Psoas muscle (tissue), 8 donors: ENCODE measurements at regions of chr14 and their contacts with region 1.

Region 1: GRCh38 chr14:82951171-82951570 is 1417.5 kb upstream of the SEL1L start:
- DNase-seq: no peak
- ATAC-seq: no peak
- H3K4me3 ChIP-seq: no peak overlapping the region
- H3K27ac ChIP-seq: no peak overlapping the region
- H3K4me1 ChIP-seq: no peaks in the 10 kb centered on the region
- H3K27me3 ChIP-seq: no peaks in the 10 kb centered on the region
- CTCF ChIP-seq: no peak

Region 2: GRCh38 chr14:82626156-82627066 is 324.8 kb before region 1 on chr14:
- intact Hi-C with region 1: no loop called
- DNase-seq: no peak
- ATAC-seq: no peak
- H3K4me3 ChIP-seq: no peak overlapping the region
- H3K27ac ChIP-seq: no peak overlapping the region
- H3K4me1 ChIP-seq: no peaks in the 10 kb centered on the region
- H3K27me3 ChIP-seq: no peaks in the 10 kb centered on the region
- CTCF ChIP-seq: no peak

Region 3: GRCh38 chr14:82911930-82912329 is 39.2 kb before region 1 on chr14:
- intact Hi-C with region 1: no loop called
- DNase-seq: no peak
- ATAC-seq: no peak
- H3K4me3 ChIP-seq: no peak overlapping the region
- H3K27ac ChIP-seq: no peak overlapping the region
- H3K4me1 ChIP-seq: no peaks in the 10 kb centered on the region
- H3K27me3 ChIP-seq: no peaks in the 10 kb centered on the region
- CTCF ChIP-seq: no peak

Region 4: GRCh38 chr14:82963723-82964122 is 12.6 kb after region 1 on chr14:
- intact Hi-C with region 1: loop called in 1 of 2 experiments (anchors 2 kb)
- DNase-seq: no peak
- ATAC-seq: no peak
- H3K4me3 ChIP-seq: no peak overlapping the region
- H3K27ac ChIP-seq: no peak overlapping the region
- H3K4me1 ChIP-seq: no peaks in the 10 kb centered on the region
- H3K27me3 ChIP-seq: no peaks in the 10 kb centered on the region
- CTCF ChIP-seq: no peak

Region 5: DNA sequence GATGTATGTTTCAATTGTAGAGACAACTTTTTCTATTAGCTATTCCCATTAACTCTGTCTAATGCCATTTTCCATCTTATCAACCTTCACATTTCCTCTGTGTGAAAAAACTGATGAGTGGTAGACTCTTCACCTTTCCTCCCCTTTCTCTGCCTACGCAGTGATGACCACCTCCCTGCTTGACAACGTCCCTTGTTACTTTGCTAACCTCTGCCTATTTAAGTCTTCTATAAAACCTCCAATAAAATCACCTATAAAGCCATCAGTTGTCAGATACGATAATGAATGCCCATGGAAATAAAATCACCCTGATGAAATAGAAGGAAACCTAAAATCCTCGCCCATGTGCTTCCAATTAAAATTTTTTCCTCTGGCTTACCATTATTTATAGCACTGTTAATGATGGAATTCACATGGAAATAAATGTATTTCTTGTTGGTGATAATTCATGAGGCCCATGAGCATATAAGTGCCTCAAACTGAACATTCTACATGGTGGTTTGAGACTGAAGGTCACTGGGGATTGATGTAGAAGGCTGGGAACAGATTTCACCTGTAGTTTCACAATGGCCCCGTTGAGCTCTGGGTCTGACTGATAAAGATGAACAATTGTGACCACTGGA is 36.4 kb after region 1 on chr14:
- intact Hi-C with region 1: no loop called
- DNase-seq: no peak
- ATAC-seq: no peak
- H3K4me3 ChIP-seq: no peak overlapping the region
- H3K27ac ChIP-seq: no peak overlapping the region
- H3K4me1 ChIP-seq: no peaks in the 10 kb centered on the region
- H3K27me3 ChIP-seq: peaks cover 0 to 2% (median 0%) of the 10 kb centered on the region in 3 donors
- CTCF ChIP-seq: no peak

Region 6: DNA sequence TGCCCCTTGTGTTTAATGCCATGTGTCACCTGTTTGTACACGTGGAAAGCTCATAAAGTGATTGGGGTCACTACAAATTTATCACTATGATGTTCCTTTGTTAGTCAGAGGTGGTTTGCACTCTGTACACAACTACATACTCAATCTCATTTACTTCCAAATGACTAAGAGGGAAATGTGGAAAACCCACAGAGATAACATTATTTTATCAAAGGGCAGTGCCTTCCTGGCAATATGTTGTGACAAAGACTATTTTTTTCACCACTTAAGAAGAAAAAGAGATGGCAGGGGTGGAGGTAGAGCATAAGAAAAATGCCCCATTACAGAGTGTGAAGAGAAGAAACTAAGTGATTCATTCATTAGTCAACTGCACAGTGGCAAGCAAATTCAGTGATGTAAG is 1514.7 kb after region 1 on chr14:
- intact Hi-C with region 1: no loop called
- DNase-seq: no peak
- ATAC-seq: no peak
- H3K4me3 ChIP-seq: no peak overlapping the region
- H3K27ac ChIP-seq: no peak overlapping the region
- H3K4me1 ChIP-seq: no peaks in the 10 kb centered on the region
- H3K27me3 ChIP-seq: no peaks in the 10 kb centered on the region
- CTCF ChIP-seq: no peak